IMR-90 (cell line): ENCODE measurements at regions of chr2 and their contacts with region 1.

Region 1: GRCh38 chr2:232854082-232854481 is 16.0 kb upstream of the SNORC start:
- DNase-seq: peak; percentile 88
- ATAC-seq: peak; percentile 77
- H3K4me3 ChIP-seq: no peak overlapping the region
- H3K27ac ChIP-seq: no peak overlapping the region
- H3K4me1 ChIP-seq: peaks cover 8% of the 10 kb centered on the region
- H3K27me3 ChIP-seq: no peaks in the 10 kb centered on the region
- CTCF ChIP-seq: no peak
- POLR2A ChIP-seq: no peak
- RAD21 ChIP-seq: no peak

Region 2: GRCh38 chr2:232876078-232876977 is 22.2 kb after region 1 on chr2:
- CTCF ChIA-PET with region 1: no interaction called
- POLR2A ChIA-PET with region 1: no interaction called
- dilution Hi-C with region 1: no loop called
- in situ Hi-C with region 1: no loop called
- intact Hi-C with region 1: no loop called
- DNase-seq: no peak
- ATAC-seq: peak; percentile 64
- H3K4me3 ChIP-seq: peak overlapping the region; percentile 38
- H3K27ac ChIP-seq: no peak overlapping the region
- H3K4me1 ChIP-seq: peaks cover 1% of the 10 kb centered on the region; the same call in 1 of the 2 replicates
- H3K27me3 ChIP-seq: peaks cover 18% of the 10 kb centered on the region
- CTCF ChIP-seq: 0 out of 2 replicates have a peak, but pooled peaks have one; percentile 18
- POLR2A ChIP-seq: no peak
- RAD21 ChIP-seq: no peak

Region 3: DNA sequence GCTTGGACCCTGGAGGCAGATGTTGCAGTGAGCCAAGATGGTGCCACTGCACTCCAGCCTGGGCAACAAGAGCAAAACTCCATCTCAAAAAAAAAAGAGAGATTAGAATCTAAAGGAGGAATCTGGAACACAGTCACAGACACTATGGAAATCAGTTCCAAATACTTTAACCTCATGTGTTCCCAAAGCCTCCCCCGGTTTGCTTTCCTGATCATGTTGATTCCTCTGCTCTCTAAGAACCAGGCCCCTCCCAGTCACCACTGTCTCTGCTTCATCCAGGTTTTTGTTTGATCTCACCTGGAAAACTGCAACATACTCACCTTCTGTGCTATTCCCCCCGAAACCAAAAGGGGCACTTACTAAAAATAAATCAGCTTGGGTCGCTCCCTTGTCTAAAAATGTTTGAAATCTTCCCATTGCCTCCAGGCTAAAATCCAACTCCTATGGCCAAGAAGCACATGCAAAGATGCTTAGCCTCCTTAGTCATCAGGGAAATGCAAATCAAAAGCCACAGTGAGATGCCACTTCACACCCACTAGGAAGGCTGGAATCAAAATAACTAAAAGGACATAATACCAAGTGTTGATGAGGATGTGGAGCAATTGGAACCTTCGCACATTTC is 172.2 kb after region 1 on chr2:
- CTCF ChIA-PET with region 1: no interaction called
- POLR2A ChIA-PET with region 1: no interaction called
- dilution Hi-C with region 1: no loop called
- in situ Hi-C with region 1: no loop called
- intact Hi-C with region 1: loop called (anchors 1 kb)
- DNase-seq: peak; percentile 50
- ATAC-seq: peak; percentile 67; the same call in 1 of the 2 replicates
- H3K4me3 ChIP-seq: no peak overlapping the region
- H3K27ac ChIP-seq: no peak overlapping the region
- H3K4me1 ChIP-seq: no peaks in the 10 kb centered on the region
- H3K27me3 ChIP-seq: peaks cover 6% of the 10 kb centered on the region
- CTCF ChIP-seq: no peak
- POLR2A ChIP-seq: no peak
- RAD21 ChIP-seq: no peak

Region 4: DNA sequence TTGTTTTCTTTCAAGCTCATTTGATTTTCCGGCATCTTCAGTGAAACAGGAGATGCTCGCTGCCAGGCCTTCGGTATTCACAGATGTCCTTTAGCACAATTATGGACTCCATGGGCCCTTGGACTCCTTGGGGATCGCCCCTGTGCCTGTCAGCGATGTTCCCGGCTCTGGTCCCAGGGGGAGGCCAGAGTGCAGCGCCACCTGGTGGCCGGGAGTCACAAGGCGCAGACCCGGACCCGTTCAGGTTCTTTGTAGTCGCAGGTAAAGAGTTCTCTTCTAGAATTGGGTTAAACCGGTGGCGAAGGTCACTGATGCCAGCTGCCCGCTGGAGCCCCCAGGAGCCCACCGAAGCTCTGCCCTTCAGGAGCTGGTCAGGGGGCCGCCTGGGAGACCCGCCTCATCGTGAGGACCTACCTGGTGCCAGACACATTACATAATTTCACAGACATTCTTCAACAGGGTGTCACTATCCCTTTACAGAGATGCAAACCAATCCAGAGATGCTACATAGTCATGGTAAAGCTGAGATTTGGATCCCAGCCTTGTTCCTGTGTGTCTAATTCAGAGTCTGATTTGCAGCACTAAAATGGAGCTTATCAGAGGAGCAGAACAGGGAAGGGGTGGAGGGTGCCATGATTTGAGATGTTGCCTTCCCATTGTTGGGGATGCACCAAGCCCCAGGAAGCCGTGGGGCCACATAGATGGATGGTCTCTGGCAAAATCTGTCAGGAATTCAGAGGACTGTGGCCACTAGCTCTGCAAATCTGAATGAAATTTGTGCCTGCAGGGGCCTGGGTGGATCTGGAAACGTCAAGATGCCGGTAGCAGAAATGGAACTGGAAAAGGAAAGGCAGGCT is 200.1 kb after region 1 on chr2:
- CTCF ChIA-PET with region 1: interaction called, 3 read pairs
- POLR2A ChIA-PET with region 1: no interaction called
- dilution Hi-C with region 1: no loop called
- in situ Hi-C with region 1: loop called (anchors 10 kb)
- intact Hi-C with region 1: loop called (anchors 1 kb)
- DNase-seq: peak; percentile 23
- ATAC-seq: peak; percentile 87
- H3K4me3 ChIP-seq: no peak overlapping the region
- H3K27ac ChIP-seq: no peak overlapping the region
- H3K4me1 ChIP-seq: no peaks in the 10 kb centered on the region
- H3K27me3 ChIP-seq: peaks cover 28% of the 10 kb centered on the region
- CTCF ChIP-seq: peak; percentile 75
- POLR2A ChIP-seq: no peak
- RAD21 ChIP-seq: peak; percentile 72